Activated CD4-positive, alpha-beta memory T cell treated with anti-CD3 and anti-CD28 coated beads for 36 hours (primary cell): ENCODE measurements at regions of chr6 and their contacts with region 1.

Region 1: DNA sequence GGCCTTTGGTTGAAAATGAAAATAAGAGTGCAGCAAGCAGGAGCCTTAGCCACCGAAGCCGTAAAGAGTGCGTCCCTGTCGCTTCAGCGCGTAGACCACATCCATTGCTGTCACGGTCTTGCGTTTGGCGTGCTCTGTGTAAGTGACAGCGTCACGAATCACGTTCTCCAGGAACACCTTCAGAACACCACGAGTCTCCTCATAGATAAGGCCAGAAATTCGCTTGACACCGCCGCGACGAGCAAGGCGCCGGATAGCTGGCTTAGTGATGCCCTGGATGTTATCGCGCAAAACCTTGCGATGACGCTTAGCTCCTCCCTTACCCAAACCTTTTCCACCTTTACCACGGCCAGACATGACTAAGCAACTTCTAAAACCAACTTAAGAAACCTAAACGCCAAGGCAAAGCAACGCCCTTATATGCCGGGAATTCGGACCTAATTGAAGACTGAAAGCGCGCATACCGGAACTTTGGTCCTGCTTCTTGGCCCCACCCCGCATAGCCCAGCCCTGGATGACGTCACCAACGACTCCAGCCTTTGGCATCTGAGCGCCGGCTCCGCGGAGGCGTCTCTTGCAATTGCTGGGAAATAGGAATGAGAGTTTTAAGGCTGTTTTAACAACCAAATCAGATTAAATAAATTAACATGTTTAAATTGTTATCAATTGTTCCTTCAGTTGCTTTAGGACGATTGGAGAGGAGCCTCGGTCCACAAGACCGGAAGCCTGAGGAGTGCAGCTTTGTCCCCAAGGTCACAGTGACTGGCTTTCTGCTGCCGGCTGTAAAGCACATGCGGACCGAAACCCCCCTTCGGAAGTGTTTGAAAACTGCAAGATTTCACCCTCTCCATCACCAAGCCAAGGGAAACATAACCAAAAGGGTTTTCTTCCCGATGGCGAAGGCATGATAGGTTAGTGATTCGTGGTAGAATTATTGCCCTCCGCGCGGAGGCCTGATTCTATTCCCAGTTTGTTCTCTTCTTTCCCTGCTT is 79.6 kb upstream of the BTN3A2 start:
- DNase-seq: peak; percentile 98
- H3K4me3 Mint-ChIP-seq: peak overlapping the region; percentile 92
- H3K27ac Mint-ChIP-seq: peak overlapping the region; percentile 96
- H3K4me1 Mint-ChIP-seq: peaks cover 16% of the 10 kb centered on the region
- H3K27me3 Mint-ChIP-seq: peaks cover 5% of the 10 kb centered on the region

Region 2: GRCh38 chr6:26183581-26184366 is 101.7 kb before region 1 on chr6:
- CTCF ChIA-PET with region 1: no interaction called
- POLR2A ChIA-PET with region 1: interaction called, 13 read pairs
- intact Hi-C with region 1: no loop called
- DNase-seq: peak; percentile 80
- H3K4me3 Mint-ChIP-seq: peak overlapping the region; percentile 85
- H3K27ac Mint-ChIP-seq: peak overlapping the region; percentile 95
- H3K4me1 Mint-ChIP-seq: peaks cover 37% of the 10 kb centered on the region
- H3K27me3 Mint-ChIP-seq: peaks cover under 1% of the 10 kb centered on the region

Region 3: GRCh38 chr6:26204332-26205165 is 80.9 kb before region 1 on chr6:
- CTCF ChIA-PET with region 1: no interaction called
- POLR2A ChIA-PET with region 1: interaction called, 20 read pairs
- intact Hi-C with region 1: loop called (anchors 1 kb)
- DNase-seq: peak; percentile 90
- H3K4me3 Mint-ChIP-seq: no peak overlapping the region
- H3K27ac Mint-ChIP-seq: no peak overlapping the region
- H3K4me1 Mint-ChIP-seq: peaks cover 21% of the 10 kb centered on the region
- H3K27me3 Mint-ChIP-seq: peaks cover 3% of the 10 kb centered on the region

Region 4: DNA sequence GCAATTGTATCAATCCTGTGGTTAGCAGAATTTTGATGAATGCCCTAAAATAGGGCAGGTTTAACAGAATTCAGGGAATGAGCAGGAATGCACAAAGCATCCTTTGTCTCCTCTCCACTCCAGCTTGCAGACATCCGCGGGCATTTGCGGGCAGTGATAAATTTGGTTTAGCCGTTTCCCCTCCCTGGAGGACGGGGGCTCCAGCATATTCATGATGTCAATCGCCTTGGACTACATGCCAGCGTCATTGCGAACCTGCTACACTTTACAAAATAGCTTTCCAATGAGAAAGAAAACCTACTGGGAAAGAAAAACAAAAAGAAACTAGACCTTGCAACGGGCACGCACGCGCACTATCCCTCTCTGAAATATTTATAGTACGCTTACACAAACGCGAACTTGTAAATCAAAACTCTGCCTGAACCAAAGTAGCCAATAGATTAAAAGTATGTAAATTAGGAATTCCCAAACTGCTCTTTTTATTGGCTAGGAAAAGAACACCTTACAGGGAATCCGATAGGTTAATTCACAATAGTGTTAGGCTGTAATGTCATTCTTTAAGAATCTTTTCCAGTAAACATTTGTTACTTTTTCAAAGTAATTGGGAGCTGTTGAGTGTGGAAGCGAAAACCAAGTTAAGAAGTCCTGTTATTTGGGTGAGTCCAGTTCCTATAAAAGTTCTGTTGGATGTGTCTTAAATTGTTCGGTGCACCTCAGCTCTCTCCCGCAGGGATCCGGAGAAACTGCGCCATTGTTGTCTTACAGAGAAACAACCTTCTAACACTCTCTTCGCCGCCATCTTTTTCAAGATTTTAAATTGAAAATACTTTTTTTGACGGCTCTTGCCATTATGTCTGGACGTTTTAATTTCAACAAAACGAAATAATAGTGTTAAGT is 61.5 kb before region 1 on chr6:
- CTCF ChIA-PET with region 1: no interaction called
- POLR2A ChIA-PET with region 1: interaction called, 14 read pairs
- intact Hi-C with region 1: no loop called
- DNase-seq: peak; percentile 77
- H3K4me3 Mint-ChIP-seq: no peak overlapping the region
- H3K27ac Mint-ChIP-seq: no peak overlapping the region
- H3K4me1 Mint-ChIP-seq: peaks cover 13% of the 10 kb centered on the region
- H3K27me3 Mint-ChIP-seq: no peaks in the 10 kb centered on the region

Region 5: GRCh38 chr6:26240154-26241032 is 45.0 kb before region 1 on chr6:
- CTCF ChIA-PET with region 1: no interaction called
- POLR2A ChIA-PET with region 1: interaction called, 36 read pairs
- intact Hi-C with region 1: loop called (anchors 1 kb)
- DNase-seq: peak; percentile 85
- H3K4me3 Mint-ChIP-seq: peak overlapping the region; percentile 70
- H3K27ac Mint-ChIP-seq: peak overlapping the region; percentile 91
- H3K4me1 Mint-ChIP-seq: peaks cover 20% of the 10 kb centered on the region
- H3K27me3 Mint-ChIP-seq: peaks cover 4% of the 10 kb centered on the region

Region 6: DNA sequence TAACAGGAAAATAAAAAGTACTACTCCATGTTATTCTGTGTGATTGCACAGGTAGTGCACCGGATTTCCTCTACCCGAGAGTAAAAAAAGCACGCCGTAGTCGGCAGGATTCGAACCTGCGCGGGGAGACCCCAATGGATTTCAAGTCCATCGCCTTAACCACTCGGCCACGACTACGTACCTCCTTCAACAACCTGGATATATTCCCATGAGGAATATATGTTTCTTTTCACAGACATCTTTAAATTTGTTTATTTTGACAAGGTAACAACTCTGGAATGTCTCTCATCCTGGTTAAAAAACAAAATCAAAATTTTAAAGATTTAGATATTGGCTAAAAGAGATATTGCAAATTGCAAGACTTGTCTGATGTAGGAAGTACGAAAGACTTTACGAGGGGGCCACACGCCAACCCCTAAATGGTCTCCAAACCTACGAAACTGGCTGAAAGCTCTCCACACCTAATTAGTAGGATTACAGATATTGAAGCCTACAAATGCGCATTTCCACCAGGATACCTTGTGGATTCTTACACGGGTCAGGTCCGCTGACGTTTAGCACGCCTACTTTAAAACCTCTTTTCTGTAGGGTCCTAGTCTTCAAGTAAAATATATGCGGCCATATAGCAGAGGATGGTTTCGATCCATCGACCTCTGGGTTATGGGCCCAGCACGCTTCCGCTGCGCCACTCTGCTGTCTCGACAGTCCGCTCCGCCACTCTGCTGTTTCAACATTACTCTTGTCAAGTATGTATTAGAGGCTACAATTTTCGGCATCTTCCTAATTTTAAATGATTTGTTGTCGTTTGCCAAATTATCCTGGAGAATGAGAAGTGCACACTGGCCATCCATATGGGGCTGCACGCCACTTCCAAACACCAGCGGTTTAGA is 27.3 kb after region 1 on chr6:
- CTCF ChIA-PET with region 1: interaction called, 3 read pairs
- POLR2A ChIA-PET with region 1: interaction called, 20 read pairs
- intact Hi-C with region 1: loop called (anchors 1 kb)
- DNase-seq: peak; percentile 89
- H3K4me3 Mint-ChIP-seq: peak overlapping the region; percentile 85
- H3K27ac Mint-ChIP-seq: peak overlapping the region; percentile 82
- H3K4me1 Mint-ChIP-seq: peaks cover 42% of the 10 kb centered on the region
- H3K27me3 Mint-ChIP-seq: peaks cover 7% of the 10 kb centered on the region

Region 7: GRCh38 chr6:27146706-27147505 is 861.5 kb after region 1 on chr6:
- CTCF ChIA-PET with region 1: no interaction called
- POLR2A ChIA-PET with region 1: interaction called, 12 read pairs
- intact Hi-C with region 1: no loop called
- DNase-seq: peak; percentile 89
- H3K4me3 Mint-ChIP-seq: no peak overlapping the region
- H3K27ac Mint-ChIP-seq: no peak overlapping the region
- H3K4me1 Mint-ChIP-seq: peaks cover 21% of the 10 kb centered on the region
- H3K27me3 Mint-ChIP-seq: no peaks in the 10 kb centered on the region